MCF 10A (cell line): ENCODE measurements at regions of chr5 and their contacts with region 1.

Region 1: GRCh38 chr5:10695055-10695649 is 65.9 kb downstream of the DAP start:
- DNase-seq: peak; percentile 79
- H3K4me3 Mint-ChIP-seq: peak overlapping the region; percentile 6
- H3K27ac Mint-ChIP-seq: no peak overlapping the region
- H3K4me1 Mint-ChIP-seq: peaks cover 11% of the 10 kb centered on the region
- H3K27me3 Mint-ChIP-seq: no peaks in the 10 kb centered on the region
- CTCF ChIP-seq: peak; percentile 69

Region 2: DNA sequence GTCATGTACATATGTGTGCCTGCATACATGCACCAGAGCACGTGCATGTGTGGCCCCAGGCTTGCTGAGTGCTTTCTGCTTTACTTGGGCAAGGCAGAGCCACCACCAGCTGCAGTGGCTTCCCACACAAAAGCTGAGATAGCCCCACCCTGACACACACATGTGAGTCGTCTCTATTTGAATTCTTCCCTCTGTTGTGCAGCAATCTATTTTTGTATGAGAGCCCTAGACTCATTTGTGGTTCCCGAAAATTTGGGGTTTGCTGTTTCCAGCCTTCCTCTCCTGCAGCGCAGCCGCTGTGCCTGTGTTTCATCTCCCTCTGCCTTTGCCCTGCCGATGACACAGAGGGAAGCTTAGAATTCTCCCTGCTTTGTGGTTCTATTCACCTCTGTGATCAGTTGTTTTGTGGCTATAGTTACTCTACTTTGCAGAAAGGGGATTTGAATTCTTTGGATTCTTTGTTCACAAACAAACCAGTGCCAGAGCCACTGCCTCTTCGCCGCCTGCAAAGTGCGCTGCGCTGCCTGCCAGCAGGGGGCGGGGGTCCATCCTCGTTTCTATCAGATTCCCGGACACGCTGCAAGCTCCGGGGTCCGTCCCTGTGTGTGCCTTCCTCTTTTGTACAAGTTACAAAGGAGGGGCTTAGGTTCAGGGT is 161.7 kb after region 1 on chr5:
- CTCF ChIA-PET with region 1: interaction called, 5 read pairs
- POLR2A ChIA-PET with region 1: no interaction called
- intact Hi-C with region 1: loop called (anchors 5 kb)
- DNase-seq: peak; percentile 12
- H3K4me3 Mint-ChIP-seq: no peak overlapping the region
- H3K27ac Mint-ChIP-seq: no peak overlapping the region
- H3K4me1 Mint-ChIP-seq: no peaks in the 10 kb centered on the region
- H3K27me3 Mint-ChIP-seq: peaks cover 35% of the 10 kb centered on the region
- CTCF ChIP-seq: peak; percentile 68

Region 3: DNA sequence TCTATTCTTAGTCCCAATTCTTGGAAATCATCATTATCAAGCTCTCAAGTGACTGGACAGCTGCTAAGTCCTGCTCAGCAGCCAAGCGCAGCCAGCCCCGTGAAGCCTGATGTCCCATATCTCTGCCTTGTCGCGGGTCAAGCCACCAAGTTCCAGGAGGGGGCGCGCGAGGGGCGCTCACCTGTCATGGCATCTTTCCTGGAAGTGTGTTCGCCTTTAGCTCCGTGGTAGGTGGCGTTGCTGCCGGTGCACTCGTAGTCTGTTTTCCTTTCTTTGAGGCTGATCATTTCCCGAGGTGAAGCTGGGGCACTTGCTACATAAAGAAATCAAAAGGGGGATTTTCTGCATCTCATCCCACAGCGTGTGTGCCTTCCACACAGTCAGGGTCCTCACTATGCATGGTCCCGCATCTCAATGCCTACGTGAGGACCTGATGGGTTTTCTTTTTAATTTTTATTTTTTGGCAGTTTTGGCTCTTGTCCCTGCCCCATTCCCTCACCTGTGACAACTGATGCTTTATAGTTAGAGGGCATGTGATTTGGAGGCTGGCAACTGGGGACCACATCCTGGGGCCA is 292.9 kb after region 1 on chr5:
- CTCF ChIA-PET with region 1: interaction called, 4 read pairs
- POLR2A ChIA-PET with region 1: no interaction called
- intact Hi-C with region 1: loop called (anchors 10 kb)
- DNase-seq: peak; percentile 70
- H3K4me3 Mint-ChIP-seq: no peak overlapping the region
- H3K27ac Mint-ChIP-seq: no peak overlapping the region
- H3K4me1 Mint-ChIP-seq: peaks cover 5% of the 10 kb centered on the region
- H3K27me3 Mint-ChIP-seq: peaks cover 65% of the 10 kb centered on the region
- CTCF ChIP-seq: peak; percentile 68

Region 4: DNA sequence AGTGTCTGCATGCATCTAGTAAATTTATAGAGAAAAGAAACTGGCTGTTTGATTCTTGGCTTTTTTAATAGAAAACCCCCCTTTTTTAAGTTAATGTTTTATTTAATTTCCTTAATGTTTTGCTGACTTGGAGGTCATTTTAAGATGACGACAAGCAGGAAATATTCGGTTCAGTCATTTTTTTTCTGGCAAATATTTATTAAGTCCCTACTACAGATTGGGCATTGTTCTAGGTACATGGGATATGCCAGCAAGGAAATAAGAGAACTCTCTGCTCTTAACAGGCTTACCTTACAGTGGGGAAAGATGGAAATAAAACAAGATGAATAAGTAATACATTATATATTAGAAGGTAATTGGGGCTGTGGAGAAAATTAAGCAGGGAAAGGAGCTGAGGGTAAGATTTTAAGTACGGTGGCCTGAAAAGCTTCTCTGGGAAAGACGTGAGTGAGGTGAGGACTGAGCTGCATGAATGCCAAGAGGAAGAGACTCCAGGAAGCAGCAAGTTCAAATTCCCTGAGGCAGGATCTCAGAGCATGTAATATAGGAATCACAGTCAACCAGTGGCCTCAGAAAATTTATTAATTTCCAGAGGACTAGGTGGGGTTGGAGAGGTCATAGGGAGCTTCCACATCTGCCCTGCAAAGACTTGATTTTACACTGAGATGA is 381.9 kb after region 1 on chr5:
- CTCF ChIA-PET with region 1: no interaction called
- POLR2A ChIA-PET with region 1: no interaction called
- intact Hi-C with region 1: no loop called
- DNase-seq: no peak
- H3K4me3 Mint-ChIP-seq: no peak overlapping the region
- H3K27ac Mint-ChIP-seq: no peak overlapping the region
- H3K4me1 Mint-ChIP-seq: no peaks in the 10 kb centered on the region
- H3K27me3 Mint-ChIP-seq: peaks cover 66% of the 10 kb centered on the region
- CTCF ChIP-seq: no peak

Region 5: DNA sequence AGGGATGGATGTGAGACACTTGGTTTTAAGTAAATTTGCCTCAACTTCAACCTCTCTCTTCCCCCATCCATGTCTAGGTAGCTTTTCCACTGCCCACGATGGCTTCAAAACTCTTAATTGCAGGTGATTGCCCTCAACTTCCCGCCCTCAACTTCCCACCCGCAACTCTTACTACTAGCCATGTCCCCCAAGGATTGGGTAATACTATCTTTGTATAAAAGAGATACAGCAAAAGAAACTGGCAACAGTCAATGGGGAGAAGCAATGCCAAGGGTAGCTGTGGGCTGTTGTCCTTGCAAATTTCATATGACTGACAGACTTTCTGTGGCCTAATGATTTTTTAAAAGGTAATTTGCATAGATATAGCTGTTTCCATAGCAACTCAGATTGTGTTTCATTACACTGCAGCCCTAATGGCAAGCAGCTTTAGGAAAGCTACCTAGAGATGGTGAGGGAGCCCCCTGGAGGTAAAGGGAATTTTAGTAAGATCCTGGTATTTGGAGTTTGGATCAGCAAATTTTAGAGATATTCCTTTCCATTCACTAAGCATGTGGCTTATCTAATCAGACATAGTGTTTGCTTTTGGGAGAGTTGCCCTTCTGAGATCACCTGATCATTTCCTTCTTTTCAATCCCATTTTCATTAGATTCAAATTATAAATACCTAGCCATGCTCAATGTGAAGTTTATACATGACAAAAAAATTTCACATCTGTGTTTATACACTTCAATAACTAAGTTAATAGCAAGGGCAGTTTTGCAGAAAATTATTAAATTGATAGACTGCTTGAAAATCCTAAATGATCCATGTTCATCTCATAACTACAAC is 487.5 kb after region 1 on chr5:
- CTCF ChIA-PET with region 1: interaction called, 9 read pairs
- POLR2A ChIA-PET with region 1: no interaction called
- intact Hi-C with region 1: loop called (anchors 1 kb)
- DNase-seq: peak; percentile 50
- H3K4me3 Mint-ChIP-seq: no peak overlapping the region
- H3K27ac Mint-ChIP-seq: no peak overlapping the region
- H3K4me1 Mint-ChIP-seq: no peaks in the 10 kb centered on the region
- H3K27me3 Mint-ChIP-seq: no peaks in the 10 kb centered on the region
- CTCF ChIP-seq: peak; percentile 47

Region 6: DNA sequence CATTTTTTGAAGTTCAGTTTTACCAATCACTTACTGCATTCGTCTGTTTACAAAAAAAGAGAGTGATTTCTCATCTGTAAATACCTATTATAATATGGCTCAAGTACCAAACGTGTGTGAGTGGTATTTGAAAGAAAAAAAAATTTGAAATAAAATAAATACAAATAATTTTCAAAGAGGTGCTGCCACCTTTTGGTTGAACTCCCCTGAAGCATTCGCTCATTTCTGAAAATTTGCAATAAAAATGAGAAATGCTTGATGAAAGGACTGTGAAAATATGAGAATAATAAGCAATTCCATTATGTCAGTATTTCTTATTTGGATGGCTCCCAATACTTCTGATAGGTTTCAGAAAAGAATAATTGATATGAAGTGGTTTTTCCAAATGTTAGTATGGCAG is 799.2 kb after region 1 on chr5:
- CTCF ChIA-PET with region 1: interaction called, 3 read pairs
- POLR2A ChIA-PET with region 1: no interaction called
- intact Hi-C with region 1: loop called (anchors 5 kb)
- DNase-seq: no peak
- H3K4me3 Mint-ChIP-seq: no peak overlapping the region
- H3K27ac Mint-ChIP-seq: no peak overlapping the region
- H3K4me1 Mint-ChIP-seq: no peaks in the 10 kb centered on the region
- H3K27me3 Mint-ChIP-seq: peaks cover 20% of the 10 kb centered on the region
- CTCF ChIP-seq: peak; percentile 46

Region 7: DNA sequence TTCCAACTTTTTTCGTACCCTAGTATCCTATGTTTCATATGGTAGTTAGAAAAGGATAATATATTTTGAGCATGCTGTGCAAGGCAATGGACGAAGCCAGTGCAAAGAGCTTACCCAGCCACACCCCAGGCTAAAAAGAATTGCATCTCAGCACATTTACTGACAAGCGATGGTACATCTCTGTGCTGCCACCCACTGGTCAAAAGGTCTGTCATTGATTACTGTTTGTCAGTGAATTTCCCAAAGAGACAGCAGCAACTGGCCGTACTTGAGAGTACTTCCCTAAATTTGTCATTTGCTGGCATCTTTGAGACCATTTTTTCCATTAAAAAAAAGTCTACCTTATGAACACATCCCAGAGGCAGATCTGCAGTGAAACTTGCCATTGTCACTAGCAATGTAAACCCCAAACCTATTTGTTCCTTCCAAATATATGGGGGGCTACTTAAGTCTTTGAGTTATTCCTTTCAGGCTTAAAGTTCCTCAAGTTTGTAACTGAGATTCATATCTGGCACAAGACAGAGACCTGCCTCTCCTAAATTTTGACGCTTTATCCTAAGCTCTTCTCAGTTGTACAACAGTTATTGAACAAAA is 1024.8 kb after region 1 on chr5:
- CTCF ChIA-PET with region 1: interaction called, 4 read pairs
- POLR2A ChIA-PET with region 1: no interaction called
- intact Hi-C with region 1: loop called (anchors 10 kb)
- DNase-seq: peak; percentile 77
- H3K4me3 Mint-ChIP-seq: no peak overlapping the region
- H3K27ac Mint-ChIP-seq: no peak overlapping the region
- H3K4me1 Mint-ChIP-seq: no peaks in the 10 kb centered on the region
- H3K27me3 Mint-ChIP-seq: no peaks in the 10 kb centered on the region
- CTCF ChIP-seq: peak; percentile 43